ENCODE measurements at regions of chr2 and their contacts with region 1.

Region 1: GRCh38 chr2:28751252-28751955 is at the start of gene PPP1CB:
- DNase-seq: peak; percentile 97
- H3K4me3 ChIP-seq: peak within 1 kb of the TSS; percentile 86 to 97 (median 91)
- H3K27ac ChIP-seq: peak within 1 kb of the TSS; percentile 99
- H3K4me1 ChIP-seq: peaks cover 11 to 72% (median 39%) of the 10 kb centered on the region in 4 donors
- H3K27me3 ChIP-seq: no peaks in the 10 kb centered on the region
- CTCF ChIP-seq: peak in 3 of 5 experiments; percentile 7 to 51 (median 34)
- EP300 ChIP-seq: no peak
- POLR2A ChIP-seq: peak; percentile 93
- total RNA-seq, gene PPP1CB: 132 to 245 (median 192) TPM

Region 2: GRCh38 chr2:28621172-28622100 is 130.0 kb before region 1 on chr2:
- in situ Hi-C with region 1: loop called in 1 of 4 experiments (anchors 10 kb)
- intact Hi-C with region 1: no loop called
- DNase-seq: peak; percentile 80
- H3K4me3 ChIP-seq: no peak overlapping the region
- H3K27ac ChIP-seq: peak overlapping the region; percentile 85 to 91 (median 88)
- H3K4me1 ChIP-seq: peaks cover 42 to 69% (median 61%) of the 10 kb centered on the region in 4 donors
- H3K27me3 ChIP-seq: no peaks in the 10 kb centered on the region
- CTCF ChIP-seq: peak; percentile 20 to 73 (median 49)
- EP300 ChIP-seq: peak; percentile 87
- POLR2A ChIP-seq: peak; percentile 21

Region 3: GRCh38 chr2:28661589-28662001 is 89.8 kb before region 1 on chr2:
- in situ Hi-C with region 1: loop called in 1 of 4 experiments (anchors 10 kb)
- intact Hi-C with region 1: loop called (anchors 5 kb)
- DNase-seq: peak; percentile 75
- H3K4me3 ChIP-seq: no peak overlapping the region
- H3K27ac ChIP-seq: peak overlapping the region; percentile 83 to 91 (median 88)
- H3K4me1 ChIP-seq: peaks cover 42 to 90% (median 71%) of the 10 kb centered on the region in 4 donors
- H3K27me3 ChIP-seq: no peaks in the 10 kb centered on the region
- CTCF ChIP-seq: no peak
- EP300 ChIP-seq: peak; percentile 89
- POLR2A ChIP-seq: peak; percentile 21